GM12878 (cell line): ENCODE measurements at regions of chr2 and their contacts with region 1.

Region 1: GRCh38 chr2:207746131-207746530 is 23.6 kb downstream of the FZD5 start:
- DNase-seq: no peak
- ATAC-seq: peak; percentile 97
- H3K4me3 ChIP-seq: no peak overlapping the region
- H3K27ac ChIP-seq: no peak overlapping the region
- H3K4me1 ChIP-seq: no peaks in the 10 kb centered on the region
- H3K27me3 ChIP-seq: no peaks in the 10 kb centered on the region
- CTCF ChIP-seq: peak; percentile 91 to 93 (median 91)
- EP300 ChIP-seq: no peak
- POLR2A ChIP-seq: no peak
- RAD21 ChIP-seq: peak; percentile 100

Region 2: DNA sequence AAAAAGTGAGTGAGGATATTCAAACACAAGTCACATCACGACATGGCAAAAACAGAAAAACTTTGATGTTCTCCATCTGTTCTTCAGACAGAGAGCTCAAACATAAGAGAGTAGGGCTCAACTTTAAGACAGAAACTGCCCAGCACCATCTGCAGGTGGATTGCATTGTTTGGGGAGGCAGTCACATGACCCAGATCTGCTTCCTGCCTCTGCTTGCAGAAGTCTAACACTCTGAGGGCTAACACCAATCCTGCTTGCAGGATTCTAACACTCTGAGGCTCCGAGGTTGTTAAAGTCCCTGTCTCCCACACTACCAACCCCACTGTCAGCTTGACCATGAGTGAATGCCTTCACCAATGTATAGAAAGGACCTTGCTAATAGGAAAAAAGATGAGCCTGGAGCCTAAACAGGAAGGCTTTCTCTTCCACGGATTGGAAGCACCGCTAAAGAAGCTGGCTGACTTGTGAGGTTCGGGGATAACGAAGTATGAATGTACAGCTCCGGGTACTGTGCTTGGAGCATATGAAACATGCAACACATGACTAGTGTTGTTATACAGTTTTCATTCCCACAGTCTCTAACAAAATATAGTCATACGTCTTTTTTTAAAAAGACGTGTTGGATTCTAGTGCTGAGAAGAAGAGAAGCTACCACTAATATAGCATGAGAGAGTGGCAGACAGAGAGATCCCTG is 393.0 kb before region 1 on chr2:
- CTCF ChIA-PET with region 1: no interaction called
- POLR2A ChIA-PET with region 1: no interaction called
- RAD21 ChIA-PET with region 1: no interaction called
- SMC1A ChIA-PET with region 1: no interaction called
- in situ Hi-C with region 1: no loop called
- intact Hi-C with region 1: no loop called
- DNase-seq: no peak
- ATAC-seq: peak; percentile 90
- H3K4me3 ChIP-seq: no peak overlapping the region
- H3K27ac ChIP-seq: no peak overlapping the region
- H3K4me1 ChIP-seq: peaks cover 7% of the 10 kb centered on the region; the same call in 1 of the 2 replicates
- H3K27me3 ChIP-seq: no peaks in the 10 kb centered on the region
- CTCF ChIP-seq: peak in 1 of 3 experiments; percentile 45; a peak in 1 of 6 replicates
- EP300 ChIP-seq: no peak
- POLR2A ChIP-seq: no peak
- RAD21 ChIP-seq: peak; percentile 55

Region 3: DNA sequence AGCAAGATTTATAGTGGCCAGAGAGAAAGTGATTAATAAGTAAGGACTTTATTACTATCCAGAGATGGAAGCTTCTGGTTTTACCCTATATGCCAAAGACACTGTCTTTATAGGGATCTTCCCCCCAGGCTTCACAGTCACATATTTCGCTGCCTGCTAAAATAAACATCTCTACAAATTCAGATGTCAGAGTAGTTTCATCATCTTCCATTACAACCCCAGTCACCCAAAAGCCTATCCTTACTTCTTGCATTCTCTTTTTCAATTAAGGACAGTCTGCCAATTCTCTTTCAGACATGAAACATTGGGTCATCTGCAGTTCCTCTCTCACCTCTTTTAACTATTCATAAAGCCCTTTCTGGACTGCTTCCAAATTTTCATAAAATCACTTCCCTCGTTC is 188.0 kb before region 1 on chr2:
- CTCF ChIA-PET with region 1: no interaction called
- POLR2A ChIA-PET with region 1: no interaction called
- RAD21 ChIA-PET with region 1: no interaction called
- SMC1A ChIA-PET with region 1: no interaction called
- in situ Hi-C with region 1: no loop called
- intact Hi-C with region 1: no loop called
- DNase-seq: no peak
- ATAC-seq: no peak
- H3K4me3 ChIP-seq: no peak overlapping the region
- H3K27ac ChIP-seq: no peak overlapping the region
- H3K4me1 ChIP-seq: peaks cover 4% of the 10 kb centered on the region
- H3K27me3 ChIP-seq: no peaks in the 10 kb centered on the region
- CTCF ChIP-seq: no peak
- EP300 ChIP-seq: no peak
- POLR2A ChIP-seq: no peak
- RAD21 ChIP-seq: no peak

Region 4: DNA sequence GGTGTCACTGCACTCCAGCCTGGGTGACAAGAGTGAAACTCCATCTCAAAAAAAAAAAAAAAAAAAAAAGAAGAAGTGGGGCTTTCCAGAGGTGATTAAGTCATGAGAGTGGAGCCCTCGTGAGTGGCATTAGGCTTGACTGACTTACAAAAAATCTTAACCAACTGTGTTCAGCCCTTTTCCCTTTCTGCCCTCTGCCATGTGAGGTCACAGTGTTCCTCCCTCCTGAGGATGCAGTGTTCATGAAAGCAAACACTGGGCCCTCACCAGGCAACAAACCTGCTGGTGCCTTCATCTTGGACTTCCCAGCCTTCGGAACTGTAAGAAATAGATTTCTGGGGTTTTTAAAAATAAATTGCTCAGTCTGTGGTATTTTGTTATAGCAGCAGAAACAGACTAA is 83.9 kb before region 1 on chr2:
- CTCF ChIA-PET with region 1: no interaction called
- POLR2A ChIA-PET with region 1: no interaction called
- RAD21 ChIA-PET with region 1: no interaction called
- SMC1A ChIA-PET with region 1: no interaction called
- in situ Hi-C with region 1: no loop called
- intact Hi-C with region 1: no loop called
- DNase-seq: peak; percentile 79
- ATAC-seq: peak; percentile 97
- H3K4me3 ChIP-seq: peak overlapping the region; percentile 30; the same call in 1 of the 2 replicates
- H3K27ac ChIP-seq: peak overlapping the region; percentile 61
- H3K4me1 ChIP-seq: peaks cover 10% of the 10 kb centered on the region
- H3K27me3 ChIP-seq: no peaks in the 10 kb centered on the region
- CTCF ChIP-seq: no peak
- EP300 ChIP-seq: peak in 1 of 2 experiments; percentile 8; a peak in 1 of 4 replicates
- POLR2A ChIP-seq: peak; percentile 54
- RAD21 ChIP-seq: no peak

Region 5: DNA sequence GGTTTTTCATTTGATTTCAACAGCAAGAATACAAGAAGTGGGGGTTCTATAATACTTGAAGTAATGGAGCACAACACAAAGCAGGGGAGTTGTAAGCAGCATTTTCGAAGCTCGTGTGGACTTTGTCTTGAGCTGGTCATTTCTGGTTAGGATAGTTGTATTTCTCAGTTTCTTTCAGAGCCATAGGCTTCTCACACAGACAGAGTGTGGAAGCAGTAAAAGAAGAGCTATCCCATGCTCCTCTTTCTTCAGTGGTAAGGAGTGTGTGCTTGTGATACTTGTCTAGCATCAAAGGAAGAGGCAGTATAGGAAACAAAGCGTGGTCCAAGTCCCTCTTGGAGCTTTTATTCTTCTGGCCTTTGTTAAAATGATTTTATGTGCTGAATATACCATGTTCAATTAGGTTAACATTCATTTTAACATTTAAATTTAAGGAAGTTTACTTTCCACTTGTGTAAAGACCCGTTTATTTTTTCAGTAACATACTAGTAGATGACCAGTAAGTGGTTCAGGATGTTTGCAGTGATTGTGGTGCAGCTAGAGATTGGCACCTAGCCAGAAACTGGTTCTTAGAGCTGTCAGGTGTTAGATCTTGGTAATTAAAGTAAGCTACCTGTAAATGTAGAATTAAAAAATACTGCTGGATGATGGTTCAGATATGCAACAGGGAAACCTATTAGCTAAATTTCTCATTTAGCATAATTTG is 20.1 kb before region 1 on chr2:
- CTCF ChIA-PET with region 1: interaction called, 21 read pairs
- POLR2A ChIA-PET with region 1: no interaction called
- RAD21 ChIA-PET with region 1: interaction called, 19 read pairs
- SMC1A ChIA-PET with region 1: interaction called, 14 read pairs
- in situ Hi-C with region 1: no loop called
- intact Hi-C with region 1: no loop called
- DNase-seq: no peak
- ATAC-seq: 0 out of 3 replicates have a peak, but pooled peaks have one; percentile 14
- H3K4me3 ChIP-seq: no peak overlapping the region
- H3K27ac ChIP-seq: no peak overlapping the region
- H3K4me1 ChIP-seq: peaks cover 3% of the 10 kb centered on the region; the same call in 1 of the 2 replicates
- H3K27me3 ChIP-seq: no peaks in the 10 kb centered on the region
- CTCF ChIP-seq: no peak
- EP300 ChIP-seq: no peak
- POLR2A ChIP-seq: no peak
- RAD21 ChIP-seq: no peak

Region 6: GRCh38 chr2:207769597-207770486 is 23.7 kb after region 1 on chr2 and contains the start of gene FZD5:
- CTCF ChIA-PET with region 1: interaction called, 7 read pairs
- POLR2A ChIA-PET with region 1: no interaction called
- RAD21 ChIA-PET with region 1: interaction called, 6 read pairs
- SMC1A ChIA-PET with region 1: interaction called, 10 read pairs
- in situ Hi-C with region 1: no loop called
- intact Hi-C with region 1: no loop called
- DNase-seq: peak; percentile 68
- ATAC-seq: peak; percentile 92
- H3K4me3 ChIP-seq: peak within 1 kb of the TSS; percentile 87
- H3K27ac ChIP-seq: no peak within 1 kb of the TSS
- H3K4me1 ChIP-seq: peaks cover 17% of the 10 kb centered on the region
- H3K27me3 ChIP-seq: no peaks in the 10 kb centered on the region; a peak in 2 of 4 replicates
- CTCF ChIP-seq: peak; percentile 16 to 46 (median 44); a peak in 3 of 6 replicates
- EP300 ChIP-seq: 0 out of 4 replicates have a peak, but pooled peaks of 1 of the 2 experiments have one; percentile 35
- POLR2A ChIP-seq: peak; percentile 59
- RAD21 ChIP-seq: peak; percentile 28; the same call in 1 of the 2 replicates
- polyA plus RNA-seq, gene FZD5: 0.40 to 0.53 TPM

Region 7: GRCh38 chr2:208025037-208025813 is 279.1 kb after region 1 on chr2 and contains the start of gene PLEKHM3:
- CTCF ChIA-PET with region 1: interaction called, 9 read pairs
- POLR2A ChIA-PET with region 1: no interaction called
- RAD21 ChIA-PET with region 1: interaction called, 10 read pairs
- SMC1A ChIA-PET with region 1: interaction called, 3 read pairs
- in situ Hi-C with region 1: loop called (anchors 5 kb)
- intact Hi-C with region 1: no loop called
- DNase-seq: no peak
- ATAC-seq: peak; percentile 97
- H3K4me3 ChIP-seq: peak within 1 kb of the TSS; percentile 79
- H3K27ac ChIP-seq: peak within 1 kb of the TSS; percentile 81
- H3K4me1 ChIP-seq: peaks cover 4% of the 10 kb centered on the region
- H3K27me3 ChIP-seq: no peaks in the 10 kb centered on the region
- CTCF ChIP-seq: no peak
- EP300 ChIP-seq: peak in 1 of 2 experiments; percentile 23; a peak in 1 of 4 replicates
- POLR2A ChIP-seq: peak; percentile 85
- RAD21 ChIP-seq: no peak
- polyA plus RNA-seq, gene PLEKHM3: 1.4 to 2.0 TPM

Region 8: DNA sequence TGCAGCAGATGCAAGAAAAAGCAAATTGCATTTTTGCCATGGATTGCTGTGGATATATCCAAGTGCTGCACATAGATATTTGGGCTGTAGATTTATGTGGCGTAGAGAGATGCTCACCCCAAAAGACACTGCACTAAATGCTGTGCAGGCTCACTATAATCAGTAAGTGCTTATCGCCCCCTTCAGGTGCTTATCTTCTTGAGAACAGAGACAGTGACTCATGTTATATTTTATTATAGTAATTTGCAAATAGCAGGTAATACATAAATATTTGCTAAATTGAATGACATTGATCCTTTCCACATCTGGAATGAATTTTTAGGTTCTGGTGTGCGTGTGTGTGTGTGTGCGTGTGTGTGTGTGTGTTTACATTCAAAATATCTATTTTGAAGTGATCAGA is 316.0 kb after region 1 on chr2:
- CTCF ChIA-PET with region 1: interaction called, 14 read pairs
- POLR2A ChIA-PET with region 1: no interaction called
- RAD21 ChIA-PET with region 1: interaction called, 5 read pairs
- SMC1A ChIA-PET with region 1: interaction called, 13 read pairs
- in situ Hi-C with region 1: loop called (anchors 10 kb)
- intact Hi-C with region 1: no loop called
- DNase-seq: no peak
- ATAC-seq: peak; percentile 54
- H3K4me3 ChIP-seq: no peak overlapping the region
- H3K27ac ChIP-seq: no peak overlapping the region
- H3K4me1 ChIP-seq: peaks cover 4% of the 10 kb centered on the region
- H3K27me3 ChIP-seq: no peaks in the 10 kb centered on the region
- CTCF ChIP-seq: peak; percentile 30 to 41 (median 35); a peak in 5 of 6 replicates
- EP300 ChIP-seq: no peak
- POLR2A ChIP-seq: no peak
- RAD21 ChIP-seq: peak; percentile 54